Dorsolateral prefrontal cortex (tissue), 120 donors: ENCODE measurements at regions of chr22 and their contacts with region 1.

Region 1: GRCh38 chr22:37983860-37984791 is at the start of gene SOX10:
- DNase-seq: peak in 9 of 10 donors; percentile 60 to 84 (median 75)
- H3K4me3 ChIP-seq: peak within 1 kb of the TSS; percentile 33 to 86 (median 62)
- H3K27ac ChIP-seq: peak within 1 kb of the TSS; percentile 23 to 100 (median 92)
- H3K27me3 ChIP-seq: no peaks in the 10 kb centered on the region
- CTCF ChIP-seq: no peak
- total RNA-seq, gene SOX10: 19.6 to 299 (median 76.3) TPM

Region 2: DNA sequence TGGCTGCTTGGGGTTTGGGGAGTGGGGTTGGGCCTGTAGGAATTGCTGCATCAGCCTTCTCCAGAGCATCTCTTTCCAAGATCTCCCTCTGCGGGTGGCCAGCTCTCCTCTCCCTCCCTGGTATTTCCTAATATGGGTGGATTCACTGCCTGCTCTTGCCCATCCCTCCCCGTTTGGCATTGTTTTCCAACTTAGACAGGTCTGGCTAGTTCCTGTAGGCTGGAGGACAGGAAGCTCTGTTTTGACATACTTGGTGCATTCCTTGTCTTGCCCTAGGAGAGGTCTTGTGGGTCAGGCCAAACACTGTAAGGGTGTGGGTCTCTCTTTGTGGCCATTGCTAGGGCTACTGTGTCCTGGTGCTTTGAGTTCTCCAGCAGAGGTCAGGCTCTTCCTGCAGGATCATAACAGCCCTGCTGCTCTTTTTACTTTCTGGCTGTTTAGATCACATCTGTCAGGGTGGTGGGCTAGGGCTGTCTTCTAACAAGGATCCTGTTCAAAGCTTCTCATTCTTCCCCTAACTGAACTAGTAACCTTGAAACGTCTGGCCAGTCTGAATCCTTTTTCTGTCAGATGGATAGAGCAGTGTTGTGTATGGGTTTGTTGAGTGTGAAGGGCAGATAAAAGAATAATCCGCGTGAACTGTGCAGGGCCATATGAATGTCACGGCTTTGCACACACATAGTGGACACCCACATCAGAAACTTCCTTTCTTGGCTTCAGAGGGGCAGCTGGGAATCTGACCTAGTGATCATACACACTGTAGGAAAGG is 96.3 kb before region 1 on chr22:
- intact Hi-C with region 1: no loop called
- DNase-seq: peak in 3 of 10 donors; percentile 34 to 59 (median 54)
- H3K4me3 ChIP-seq: no peak overlapping the region
- H3K27ac ChIP-seq: peak overlapping the region in 58 of 59 donors; percentile 9 to 86 (median 73)
- H3K27me3 ChIP-seq: no peaks in the 10 kb centered on the region
- CTCF ChIP-seq: peak; percentile 23 to 94 (median 74)

Region 3: DNA sequence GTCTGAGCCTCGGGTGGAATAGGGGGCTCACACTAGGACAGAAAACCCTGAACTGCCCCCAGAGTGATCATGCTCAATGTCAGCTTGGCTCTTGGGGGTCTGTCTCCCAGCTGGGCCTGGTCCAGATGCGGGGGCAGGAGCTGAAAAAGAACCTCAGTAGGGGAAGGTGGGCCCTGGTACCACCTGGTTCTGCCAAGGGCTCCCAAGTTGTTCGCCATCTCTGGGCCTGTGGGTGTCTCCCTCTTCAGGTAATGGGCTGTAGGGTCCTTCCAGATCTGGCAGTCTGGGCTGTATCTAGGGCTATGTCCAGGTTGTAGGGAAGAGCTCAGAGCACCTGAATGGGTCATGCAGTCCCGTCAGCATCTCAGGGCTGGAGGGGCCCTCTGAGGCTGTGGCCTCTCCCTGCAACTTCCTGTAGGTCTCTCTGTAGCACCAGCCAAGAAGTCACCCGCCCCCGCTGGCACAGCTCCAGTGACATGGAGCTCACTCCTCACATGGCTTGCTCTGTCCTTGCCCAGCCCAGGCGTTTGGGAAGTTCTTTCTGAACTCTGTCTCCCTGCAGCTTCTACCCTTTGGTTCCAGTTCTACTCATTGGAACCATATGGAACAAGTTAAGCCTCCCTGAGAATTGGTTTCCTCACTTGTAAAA is 33.3 kb after region 1 on chr22:
- intact Hi-C with region 1: loop called (anchors 1 kb)
- DNase-seq: peak in 9 of 10 donors; percentile 81 to 89 (median 85)
- H3K4me3 ChIP-seq: peak overlapping the region in 31 of 59 donors; percentile 1 to 46 (median 30)
- H3K27ac ChIP-seq: peak overlapping the region; percentile 79 to 100 (median 99)
- H3K27me3 ChIP-seq: no peaks in the 10 kb centered on the region
- CTCF ChIP-seq: peak in 3 of 56 donors; percentile 10 to 13 (median 10)

Region 4: DNA sequence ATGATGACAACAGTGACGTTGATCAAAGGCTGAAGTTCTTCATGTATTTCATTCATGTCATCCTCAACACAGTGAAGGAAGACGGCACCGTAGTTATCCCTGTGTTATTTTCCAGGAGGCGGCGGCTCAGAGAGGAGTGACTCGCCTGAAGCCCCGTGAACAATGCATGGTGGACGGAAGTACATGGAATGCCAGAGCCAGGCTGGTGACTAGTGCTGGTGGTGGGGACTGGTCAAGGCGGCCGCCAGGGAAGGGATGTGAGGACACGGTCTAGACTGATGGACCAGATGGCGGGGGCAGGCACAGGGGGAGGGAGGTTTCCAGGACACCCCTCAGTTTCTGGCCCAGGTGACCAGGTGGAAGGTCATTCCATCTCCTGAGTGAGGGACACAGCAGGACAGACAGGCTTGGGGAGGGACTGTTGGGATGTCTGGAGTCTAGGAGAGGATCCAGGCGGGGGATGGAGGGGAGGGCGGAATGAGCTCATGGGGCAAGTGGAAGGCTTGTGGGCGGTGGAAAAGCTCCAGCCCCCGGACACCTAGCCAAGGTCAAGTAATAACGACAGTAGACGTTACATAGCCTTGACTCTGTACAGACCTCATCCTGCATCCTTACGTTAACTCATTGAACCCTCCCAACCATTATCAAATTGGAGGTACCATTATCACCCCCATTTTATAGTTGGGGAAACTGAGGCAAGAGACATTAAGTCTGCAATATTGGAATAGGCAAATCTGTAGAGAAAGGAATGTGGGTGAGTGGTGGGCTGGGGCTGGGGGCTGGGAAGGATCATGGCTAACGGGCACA is 57.0 kb after region 1 on chr22:
- intact Hi-C with region 1: no loop called
- DNase-seq: no peak
- H3K4me3 ChIP-seq: no peak overlapping the region
- H3K27ac ChIP-seq: peak overlapping the region in 57 of 59 donors; percentile 94 to 100 (median 99)
- H3K27me3 ChIP-seq: no peaks in the 10 kb centered on the region
- CTCF ChIP-seq: no peak

Region 5: DNA sequence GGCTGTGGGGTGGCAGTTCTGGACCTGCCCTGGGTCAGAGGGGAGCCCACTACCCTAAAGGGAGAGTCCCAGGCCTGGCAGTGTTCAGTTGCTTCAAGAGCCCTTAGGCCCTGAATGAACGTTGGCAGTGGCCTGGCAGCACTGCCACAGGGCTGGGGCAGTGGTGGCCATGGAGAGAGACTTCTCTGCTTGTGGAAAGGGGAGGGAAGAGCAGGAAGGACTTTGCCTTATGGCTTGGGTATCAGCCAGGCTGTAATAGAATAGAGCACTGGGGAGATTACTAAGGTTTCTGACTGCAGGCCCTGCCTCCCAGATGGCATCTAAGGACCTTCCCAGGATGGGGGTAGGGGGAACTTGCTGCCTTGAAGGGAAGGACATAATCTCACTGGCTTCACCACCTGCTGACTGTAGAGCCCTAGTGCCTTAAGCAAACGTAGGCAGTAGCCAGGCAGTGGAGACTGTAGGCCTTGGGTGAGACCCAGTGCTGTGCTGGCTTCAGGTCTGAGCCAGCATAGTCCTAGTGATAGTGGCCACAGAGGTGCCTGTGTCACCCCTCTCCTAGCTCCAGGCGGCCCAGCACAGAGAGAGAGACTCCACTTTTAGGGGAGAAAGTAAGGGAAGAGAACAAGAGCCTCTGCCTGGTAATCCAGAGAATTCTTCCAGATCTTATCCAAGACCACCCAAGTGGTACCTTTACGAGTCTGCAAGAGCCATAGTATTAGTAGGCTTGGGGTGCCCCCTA is 169.9 kb after region 1 on chr22:
- intact Hi-C with region 1: no loop called
- DNase-seq: peak in 2 of 10 donors; percentile 9 to 12
- H3K4me3 ChIP-seq: no peak overlapping the region
- H3K27ac ChIP-seq: peak overlapping the region in 2 of 59 donors; percentile 8 to 19
- H3K27me3 ChIP-seq: no peaks in the 10 kb centered on the region
- CTCF ChIP-seq: no peak